Heart left ventricle (tissue), 16 donors: ENCODE measurements at regions of chr4 and their contacts with region 1.

Region 1: DNA sequence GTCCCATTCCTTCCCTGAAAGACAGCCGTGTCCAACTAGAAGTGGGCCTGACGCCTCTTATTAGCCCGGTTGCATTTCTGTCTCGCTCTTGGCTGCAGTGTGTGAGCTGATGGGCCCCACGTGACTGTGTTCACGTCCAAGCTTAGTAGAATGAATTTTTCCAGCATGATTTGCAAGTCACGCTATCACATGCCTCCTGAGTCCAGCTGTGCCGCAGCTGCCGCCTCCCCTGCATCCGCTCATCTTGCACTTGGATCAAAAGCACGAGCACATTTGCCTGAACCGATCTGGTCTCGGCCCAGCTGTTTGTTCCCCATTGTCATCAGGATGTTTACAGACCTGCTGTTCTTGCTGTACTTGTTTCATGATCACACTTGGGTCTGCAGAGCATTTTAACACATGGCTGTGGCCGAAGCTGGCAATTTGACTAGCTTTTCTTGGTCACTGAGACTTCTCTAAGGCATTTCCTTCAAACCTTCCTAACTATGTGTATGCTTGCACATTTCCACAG is 126.5 kb downstream of the KIT start:
- DNase-seq: peak; percentile 88 to 93 (median 88)
- ATAC-seq: peak; percentile 94 to 95 (median 94)
- H3K4me3 ChIP-seq: peak overlapping the region in 5 of 12 donors; percentile 2 to 20 (median 12)
- H3K27ac ChIP-seq: peak overlapping the region in 11 of 12 donors; percentile 35 to 90 (median 85)
- H3K4me1 ChIP-seq: peaks cover 0 to 57% (median 42%) of the 10 kb centered on the region in 12 donors
- H3K27me3 ChIP-seq: no peaks in the 10 kb centered on the region
- CTCF ChIP-seq: no peak
- POLR2A ChIP-seq: no peak

Region 2: DNA sequence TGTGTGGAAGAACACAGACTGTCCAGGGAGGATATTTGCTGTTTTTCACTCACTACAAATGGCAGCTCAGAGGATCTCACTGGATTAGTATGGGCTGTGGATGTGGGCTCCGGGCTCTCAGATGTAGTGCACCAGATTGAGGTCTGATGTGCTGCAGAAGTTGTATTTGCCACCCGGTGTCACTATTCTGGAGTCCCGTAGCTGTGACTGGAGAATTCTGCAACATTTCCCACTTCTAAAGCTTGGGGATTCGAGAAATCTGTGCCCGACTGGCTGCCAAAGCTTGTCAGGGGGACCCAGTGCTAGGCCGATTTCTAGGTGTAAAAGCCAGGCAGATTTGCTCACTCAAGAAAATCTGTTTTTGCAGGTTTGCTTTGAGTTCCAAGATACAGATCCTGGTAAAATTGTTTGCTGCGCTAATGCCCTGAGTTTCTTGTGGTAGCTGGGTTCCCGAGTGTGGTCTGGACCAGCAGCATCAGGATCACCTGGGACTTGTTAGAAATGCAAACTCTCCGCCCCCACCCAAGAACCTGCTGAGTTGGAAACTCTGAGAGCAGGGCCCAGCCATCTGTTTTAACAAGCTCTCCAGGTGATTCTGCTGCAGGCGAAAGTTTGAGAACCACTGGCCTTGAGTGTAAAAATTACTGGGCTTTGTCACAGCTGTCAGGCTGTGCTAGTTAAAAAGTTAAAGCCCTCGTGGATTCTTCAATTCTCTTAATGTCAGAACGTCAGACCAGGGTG is 108.3 kb before region 1 on chr4:
- intact Hi-C with region 1: loop called in 1 of 10 experiments (anchors 10 kb)
- DNase-seq: no peak
- ATAC-seq: no peak
- H3K4me3 ChIP-seq: no peak overlapping the region
- H3K27ac ChIP-seq: no peak overlapping the region
- H3K4me1 ChIP-seq: no peaks in the 10 kb centered on the region
- H3K27me3 ChIP-seq: no peaks in the 10 kb centered on the region
- CTCF ChIP-seq: no peak
- POLR2A ChIP-seq: no peak

Region 3: DNA sequence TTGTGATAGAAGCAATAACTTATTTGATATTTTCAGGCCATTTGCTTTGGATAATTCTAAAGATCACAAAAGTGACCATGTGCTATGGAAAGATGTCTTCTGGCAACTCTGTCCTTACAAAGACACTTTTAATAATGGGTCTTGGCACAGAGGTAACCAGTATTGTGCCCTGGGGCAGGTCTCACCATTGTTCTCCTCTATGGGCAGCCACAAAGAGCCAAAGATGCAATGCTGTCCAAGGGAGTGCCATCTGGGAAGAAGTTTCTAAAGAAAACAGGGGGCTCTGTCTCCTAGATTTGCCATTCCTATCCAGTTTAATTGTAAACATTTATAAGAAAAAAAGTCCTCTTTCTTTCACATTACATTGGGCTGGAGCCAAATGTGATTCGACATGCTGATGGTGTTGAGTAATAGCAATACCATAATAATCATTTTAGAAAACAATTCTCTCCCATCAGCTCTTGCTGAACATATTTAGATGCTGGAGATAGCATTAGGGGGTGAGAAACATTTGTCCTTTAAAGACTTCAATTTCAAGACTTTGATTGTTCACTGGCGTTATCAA is 53.4 kb after region 1 on chr4:
- intact Hi-C with region 1: no loop called
- DNase-seq: no peak
- ATAC-seq: no peak
- H3K4me3 ChIP-seq: no peak overlapping the region
- H3K27ac ChIP-seq: no peak overlapping the region
- H3K4me1 ChIP-seq: peaks cover 0 to 10% (median 0%) of the 10 kb centered on the region in 12 donors
- H3K27me3 ChIP-seq: no peaks in the 10 kb centered on the region
- CTCF ChIP-seq: no peak
- POLR2A ChIP-seq: no peak

Region 4: GRCh38 chr4:54930226-54930625 is 146.0 kb after region 1 on chr4:
- intact Hi-C with region 1: loop called in 3 of 10 experiments (anchors 10 kb)
- DNase-seq: peak in 2 of 5 donors; percentile 23 to 36
- ATAC-seq: peak; percentile 57 to 89 (median 64)
- H3K4me3 ChIP-seq: peak overlapping the region in 1 of 12 donors; percentile 11
- H3K27ac ChIP-seq: peak overlapping the region in 11 of 12 donors; percentile 17 to 79 (median 57)
- H3K4me1 ChIP-seq: peaks cover 7 to 24% (median 13%) of the 10 kb centered on the region in 12 donors
- H3K27me3 ChIP-seq: no peaks in the 10 kb centered on the region
- CTCF ChIP-seq: no peak
- POLR2A ChIP-seq: no peak

Region 5: GRCh38 chr4:54941994-54942552 is 157.9 kb after region 1 on chr4:
- intact Hi-C with region 1: loop called in 4 of 10 experiments (anchors 10 kb)
- DNase-seq: peak in 3 of 5 donors; percentile 39 to 51 (median 41)
- ATAC-seq: peak; percentile 59 to 93 (median 64)
- H3K4me3 ChIP-seq: peak overlapping the region in 2 of 12 donors; percentile 17 to 18
- H3K27ac ChIP-seq: peak overlapping the region in 8 of 12 donors; percentile 1 to 66 (median 36)
- H3K4me1 ChIP-seq: peaks cover 0 to 16% (median 4%) of the 10 kb centered on the region in 12 donors
- H3K27me3 ChIP-seq: no peaks in the 10 kb centered on the region
- CTCF ChIP-seq: no peak
- POLR2A ChIP-seq: no peak

Region 6: DNA sequence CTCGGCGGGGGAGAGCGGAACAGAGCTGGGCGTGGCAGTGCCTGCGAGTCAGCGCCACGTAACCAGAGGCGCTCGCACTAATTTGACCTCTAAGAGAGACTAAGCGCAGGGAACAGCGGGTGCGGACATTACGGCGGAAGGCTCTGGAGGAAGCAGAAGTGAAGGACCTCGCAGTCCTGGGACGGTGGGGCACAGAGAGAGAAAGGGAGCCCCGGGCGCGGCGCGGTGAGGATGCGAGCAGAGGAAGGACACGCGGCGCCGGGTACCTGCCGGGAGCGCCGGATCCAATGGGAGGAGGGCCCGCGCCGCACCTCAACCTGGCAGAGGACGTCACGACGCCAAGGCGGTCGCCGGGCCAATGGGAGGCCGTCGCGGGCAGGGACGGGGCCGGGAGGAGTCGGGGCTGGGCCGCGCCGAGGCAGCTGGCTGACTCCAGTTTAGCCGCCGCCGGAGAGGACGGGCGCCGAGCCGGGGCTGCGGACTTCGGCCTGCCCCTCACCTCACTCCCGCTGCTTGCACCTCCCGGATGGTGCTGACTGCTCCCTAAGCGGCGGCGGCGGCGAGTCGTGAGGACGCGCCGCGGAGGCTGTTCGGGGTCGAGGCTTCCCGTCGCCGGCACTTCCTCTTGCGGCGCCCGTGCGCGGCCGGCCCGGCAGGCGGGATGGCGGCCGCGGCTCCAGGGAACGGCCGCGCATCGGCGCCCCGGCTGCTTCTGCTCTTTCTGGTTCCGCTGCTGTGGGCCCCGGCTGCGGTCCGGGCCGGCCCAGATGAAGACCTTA is 611.5 kb after region 1 on chr4 and contains the start of gene TMEM165:
- intact Hi-C with region 1: loop called in 1 of 10 experiments (anchors 5 kb)
- DNase-seq: peak; percentile 93 to 96 (median 93)
- ATAC-seq: peak; percentile 94 to 98 (median 98)
- H3K4me3 ChIP-seq: peak within 1 kb of the TSS; percentile 63 to 100 (median 94)
- H3K27ac ChIP-seq: peak within 1 kb of the TSS; percentile 96 to 100 (median 98)
- H3K4me1 ChIP-seq: peaks cover 0 to 42% (median 33%) of the 10 kb centered on the region in 12 donors
- H3K27me3 ChIP-seq: no peaks in the 10 kb centered on the region
- CTCF ChIP-seq: peak in 1 of 12 donors; percentile 7
- POLR2A ChIP-seq: peak; percentile 68 to 97
- total RNA-seq, gene TMEM165: 28.2 to 78.3 (median 53.9) TPM